A673 (cell line): ENCODE measurements at regions of chr5 and their contacts with region 1.

Region 1: DNA sequence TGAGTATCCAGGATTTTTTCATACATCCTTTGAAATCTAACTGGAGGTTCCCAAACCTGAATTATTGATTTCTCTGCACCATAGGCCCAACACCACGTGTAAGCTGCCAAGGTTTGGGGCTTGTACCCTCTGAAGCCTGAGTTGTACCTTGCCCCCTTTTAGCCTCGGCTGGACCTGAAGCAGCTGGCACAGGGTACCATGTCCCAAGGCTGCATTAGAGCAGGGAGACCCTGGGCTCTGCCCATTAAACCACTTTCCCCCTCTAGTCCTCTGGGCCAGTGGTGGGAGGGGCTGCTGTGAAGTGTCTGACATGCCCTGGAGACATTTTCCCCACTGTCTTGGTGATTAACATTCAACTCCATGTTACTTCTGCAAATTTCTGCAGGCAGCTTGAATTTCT is 532.9 kb upstream of the NUDT12 start:
- DNase-seq: no peak
- H3K4me3 ChIP-seq: no peak overlapping the region
- H3K27ac ChIP-seq: no peak overlapping the region
- H3K4me1 ChIP-seq: no peaks in the 10 kb centered on the region
- H3K27me3 ChIP-seq: no peaks in the 10 kb centered on the region
- CTCF ChIP-seq: no peak

Region 2: DNA sequence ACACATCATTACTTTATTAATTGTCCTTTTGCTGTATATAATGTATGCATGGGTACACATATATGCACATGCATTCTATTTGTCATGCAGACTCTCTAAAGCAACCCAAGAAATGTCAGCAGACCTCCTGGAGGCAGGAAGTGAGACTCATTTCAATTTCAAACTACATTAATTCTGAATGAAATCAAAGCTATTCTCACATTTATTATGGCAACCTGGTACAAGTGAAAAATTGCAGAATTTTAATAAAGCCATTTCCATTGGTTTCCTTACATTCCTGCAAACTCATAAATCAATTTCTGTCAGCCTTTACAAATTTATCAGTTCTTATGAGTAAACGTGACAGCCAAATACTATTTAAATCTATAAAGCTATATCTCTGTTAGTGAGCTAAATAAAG is 102.5 kb before region 1 on chr5:
- CTCF ChIA-PET with region 1: no interaction called
- POLR2A ChIA-PET with region 1: no interaction called
- intact Hi-C with region 1: loop called (anchors 5 kb)
- DNase-seq: peak; percentile 82
- H3K4me3 ChIP-seq: no peak overlapping the region
- H3K27ac ChIP-seq: no peak overlapping the region
- H3K4me1 ChIP-seq: peaks cover 30% of the 10 kb centered on the region
- H3K27me3 ChIP-seq: no peaks in the 10 kb centered on the region
- CTCF ChIP-seq: no peak